Ascending aorta (tissue), 2 donors: ENCODE measurements at regions of chr12 and their contacts with region 1.

Region 1: GRCh38 chr12:49069507-49070346 is at the start of gene RHEBL1:
- DNase-seq: peak; percentile 96 to 99
- H3K4me3 ChIP-seq: peak within 1 kb of the TSS; percentile 67 to 99
- H3K27ac ChIP-seq: peak within 1 kb of the TSS in 1 of 2 donors; percentile 61
- H3K4me1 ChIP-seq: peaks cover 8 to 10% of the 10 kb centered on the region in 2 donors
- H3K27me3 ChIP-seq: no peaks in the 10 kb centered on the region
- CTCF ChIP-seq: no peak
- total RNA-seq, gene RHEBL1: not detected

Region 2: GRCh38 chr12:49018261-49019119 is 51.2 kb before region 1 on chr12 and contains the start of gene PRKAG1:
- intact Hi-C with region 1: loop called (anchors 1 kb)
- DNase-seq: peak; percentile 87 to 98
- H3K4me3 ChIP-seq: peak within 1 kb of the TSS; percentile 85 to 87
- H3K27ac ChIP-seq: peak within 1 kb of the TSS; percentile 86 to 96
- H3K4me1 ChIP-seq: peaks cover 0 to 6% of the 10 kb centered on the region in 2 donors
- H3K27me3 ChIP-seq: no peaks in the 10 kb centered on the region
- CTCF ChIP-seq: peak; percentile 5 to 56 (median 55)
- total RNA-seq, gene PRKAG1: 32.8 TPM

Region 3: DNA sequence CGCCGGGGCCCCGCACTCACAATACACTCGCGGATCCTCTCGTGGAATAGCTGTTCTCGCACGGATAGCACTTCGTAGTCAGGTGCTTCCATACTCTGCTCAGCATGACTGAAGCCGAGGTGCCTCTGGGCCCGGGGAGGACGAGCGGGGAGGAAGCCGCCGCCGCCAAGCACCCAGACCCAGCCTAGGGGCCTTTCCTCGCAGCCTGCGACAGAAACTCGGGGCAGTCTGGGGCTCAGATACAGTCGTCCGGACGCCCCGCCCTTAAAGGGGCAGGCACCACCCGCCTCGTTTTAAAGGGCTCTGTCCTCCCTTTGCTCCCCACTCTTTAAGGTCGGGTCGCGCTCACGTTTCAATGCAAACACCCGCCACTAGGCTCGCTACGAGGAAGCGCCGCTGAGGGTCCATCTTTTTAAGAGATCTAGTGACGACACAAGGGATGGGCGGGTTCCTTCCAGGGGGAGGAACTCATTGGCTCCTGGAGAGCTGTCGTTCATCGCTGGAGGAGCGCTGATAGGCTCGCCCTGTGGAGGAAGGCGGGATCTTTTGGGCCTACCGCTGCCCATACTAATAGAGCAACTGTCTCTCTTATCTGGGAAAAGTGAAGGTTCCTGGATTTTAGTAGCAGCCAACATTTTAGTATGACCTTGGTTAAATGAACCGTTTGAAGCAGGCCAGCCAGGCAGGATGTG is 40.9 kb after region 1 on chr12 and contains the start of gene LMBR1L:
- intact Hi-C with region 1: loop called (anchors 1 kb)
- DNase-seq: peak; percentile 90 to 100
- H3K4me3 ChIP-seq: peak within 1 kb of the TSS; percentile 69 to 73
- H3K27ac ChIP-seq: peak within 1 kb of the TSS; percentile 93 to 95
- H3K4me1 ChIP-seq: peaks cover 19 to 32% of the 10 kb centered on the region in 2 donors
- H3K27me3 ChIP-seq: no peaks in the 10 kb centered on the region
- CTCF ChIP-seq: peak; percentile 32 to 64 (median 50)
- total RNA-seq, gene LMBR1L: 74.2 TPM

Region 4: DNA sequence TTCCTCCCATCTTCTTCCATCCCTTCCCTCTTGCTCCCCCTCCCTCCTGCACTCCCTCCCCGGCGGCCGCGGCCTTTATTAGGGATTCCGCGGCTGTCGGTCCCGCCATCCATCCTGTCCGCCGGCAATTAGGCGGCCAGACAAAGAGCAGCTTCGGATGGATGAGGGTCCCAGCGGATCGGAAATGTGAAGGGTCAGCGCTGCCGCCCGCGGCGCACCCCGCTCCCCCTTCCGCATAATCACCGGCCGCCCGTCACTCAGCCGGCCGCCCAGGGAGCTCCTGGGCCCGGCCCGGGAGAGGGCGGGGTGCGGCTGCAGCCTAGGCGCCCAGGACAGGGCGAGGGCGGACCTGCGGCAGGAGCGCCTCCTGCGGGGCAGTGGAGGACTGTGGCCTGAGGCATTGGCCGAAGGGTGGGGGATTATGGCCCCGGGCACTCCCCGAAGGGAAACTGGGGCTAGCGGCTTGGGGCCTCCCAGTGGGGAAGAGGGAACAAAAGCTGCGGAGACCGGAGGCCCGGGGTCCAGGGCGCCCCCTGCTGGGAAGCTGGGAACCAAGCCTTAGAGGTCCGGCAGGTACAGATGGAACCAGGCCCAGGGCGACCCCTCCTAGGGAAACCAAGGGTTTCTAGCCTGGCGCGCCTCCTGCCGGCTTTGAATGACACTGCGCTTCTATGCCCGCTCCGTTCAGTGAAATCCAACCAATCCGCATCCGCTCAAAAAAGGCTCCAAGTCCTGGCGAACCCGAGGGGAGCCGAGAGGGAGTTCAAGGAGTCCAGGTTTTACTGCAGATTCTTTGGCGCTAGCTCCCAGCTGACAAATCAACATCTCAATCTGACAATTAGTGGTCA is 272.6 kb after region 1 on chr12:
- intact Hi-C with region 1: loop called (anchors 10 kb)
- DNase-seq: peak in 1 of 2 donors; percentile 79
- H3K4me3 ChIP-seq: peak overlapping the region; percentile 24 to 63
- H3K27ac ChIP-seq: no peak overlapping the region
- H3K4me1 ChIP-seq: peaks cover 32 to 40% of the 10 kb centered on the region in 2 donors
- H3K27me3 ChIP-seq: peaks cover 14% of the 10 kb centered on the region
- CTCF ChIP-seq: peak; percentile 51 to 87 (median 83)